ENCODE measurements at regions of chr2 and their contacts with region 1.

Region 1: DNA sequence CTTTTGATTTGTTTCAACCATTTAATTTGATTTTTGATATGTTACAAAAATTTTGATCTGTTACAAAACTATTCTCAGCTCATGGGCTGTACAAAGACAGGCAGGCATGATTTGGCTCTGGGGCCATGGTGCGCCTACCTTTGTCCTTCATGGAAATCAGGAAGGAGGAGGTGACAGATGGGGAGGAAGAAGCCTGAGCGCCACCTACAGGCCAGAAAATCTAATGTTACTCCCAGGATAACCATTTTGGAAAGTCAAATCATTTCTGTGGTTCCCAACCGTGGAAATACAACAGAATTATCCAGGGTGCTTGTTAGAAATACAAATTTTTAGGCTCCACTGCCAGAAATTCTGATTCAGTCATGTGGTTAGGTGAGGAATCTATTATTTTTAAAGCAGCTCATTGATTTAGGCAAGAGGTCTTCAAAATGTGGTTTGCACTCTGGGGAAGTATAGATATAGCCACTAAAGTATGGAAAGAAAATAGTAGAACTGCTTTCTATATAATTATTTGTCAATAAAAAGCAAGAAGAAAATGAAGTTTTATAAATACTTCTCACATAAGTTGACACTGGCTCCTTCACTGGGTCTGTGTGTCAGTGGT is 93.9 kb downstream of the EVA1A start:
- DNase-seq: peak; percentile 57
- H3K4me3 Mint-ChIP-seq: no peak overlapping the region
- H3K27ac Mint-ChIP-seq: no peak overlapping the region
- H3K4me1 Mint-ChIP-seq: peaks cover 5% of the 10 kb centered on the region
- H3K27me3 Mint-ChIP-seq: peaks cover 20% of the 10 kb centered on the region
- CTCF ChIP-seq: peak; percentile 47

Region 2: DNA sequence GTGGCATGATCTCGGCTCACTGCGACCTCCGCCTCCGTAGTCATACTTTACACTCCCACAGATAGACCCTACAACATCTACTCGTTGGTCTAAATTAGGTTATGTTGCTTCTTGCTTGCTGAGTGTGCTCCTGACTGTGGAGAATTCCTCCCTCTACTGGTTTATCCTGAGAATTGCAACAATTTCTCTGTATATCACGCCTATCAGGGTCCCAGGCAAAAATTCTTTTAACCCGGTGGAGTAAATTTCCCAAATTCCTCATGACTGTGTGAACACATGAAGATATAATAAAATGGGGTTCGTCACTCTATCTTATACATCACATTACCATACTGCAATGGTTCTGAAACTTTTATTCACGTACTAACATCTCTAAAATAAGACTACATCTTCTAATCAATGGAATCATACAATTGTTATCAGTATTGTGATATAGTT is 62.8 kb before region 1 on chr2:
- CTCF ChIA-PET with region 1: no interaction called
- POLR2A ChIA-PET with region 1: no interaction called
- intact Hi-C with region 1: no loop called
- DNase-seq: peak; percentile 58
- H3K4me3 Mint-ChIP-seq: no peak overlapping the region
- H3K27ac Mint-ChIP-seq: no peak overlapping the region
- H3K4me1 Mint-ChIP-seq: no peaks in the 10 kb centered on the region
- H3K27me3 Mint-ChIP-seq: peaks cover 100% of the 10 kb centered on the region
- CTCF ChIP-seq: peak; percentile 86

Region 3: DNA sequence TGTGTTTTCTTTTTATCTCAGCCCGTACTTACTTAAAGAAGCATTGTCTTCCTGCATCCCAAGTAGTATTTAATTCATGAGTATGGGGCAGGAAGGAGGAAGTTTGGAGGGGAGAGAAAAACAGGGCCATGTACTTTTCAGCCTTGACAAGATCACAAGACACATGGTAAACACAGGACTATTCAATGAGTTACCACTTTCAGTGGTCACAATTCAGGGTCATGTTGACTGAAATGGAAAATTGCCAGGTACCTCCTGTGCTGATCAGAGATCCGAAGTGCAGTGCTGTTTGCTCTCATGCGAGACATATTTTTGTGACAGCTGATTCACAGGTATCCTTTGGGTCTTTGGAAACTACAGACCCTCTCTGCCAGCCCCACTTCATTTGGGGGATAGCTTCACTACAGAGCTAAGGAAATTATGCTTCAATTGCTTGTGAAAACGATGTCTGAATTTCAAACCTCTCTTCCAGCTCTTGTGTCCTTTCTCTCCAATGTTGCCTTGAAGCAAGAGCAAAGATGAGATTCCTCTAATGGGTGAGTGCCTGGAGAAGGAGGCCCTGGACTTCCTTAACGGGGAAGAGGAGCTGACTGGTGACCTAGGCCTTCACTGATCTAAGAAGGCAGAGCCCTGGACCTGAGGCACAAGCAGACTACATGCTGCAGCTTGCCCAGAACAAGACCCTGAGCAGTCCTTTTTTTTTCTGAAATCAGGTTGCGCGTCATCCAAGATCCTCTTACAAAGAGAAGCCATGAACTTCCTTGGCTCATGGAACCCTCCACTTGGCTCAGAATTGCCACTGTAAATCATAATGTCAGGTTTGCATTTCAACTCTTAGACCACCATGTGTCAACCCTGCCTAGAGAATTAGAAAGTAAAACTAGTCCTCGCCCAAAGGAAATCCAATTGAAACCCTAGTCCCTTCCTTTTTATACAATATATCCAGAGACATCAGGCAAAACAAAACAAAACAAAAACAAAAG is 49.9 kb after region 1 on chr2:
- CTCF ChIA-PET with region 1: interaction called, 15 read pairs
- POLR2A ChIA-PET with region 1: no interaction called
- intact Hi-C with region 1: no loop called
- DNase-seq: no peak
- H3K4me3 Mint-ChIP-seq: no peak overlapping the region
- H3K27ac Mint-ChIP-seq: peak overlapping the region; percentile 37
- H3K4me1 Mint-ChIP-seq: peaks cover 8% of the 10 kb centered on the region
- H3K27me3 Mint-ChIP-seq: no peaks in the 10 kb centered on the region
- CTCF ChIP-seq: no peak

Region 4: GRCh38 chr2:75553935-75554531 is 87.2 kb after region 1 on chr2:
- CTCF ChIA-PET with region 1: interaction called, 50 read pairs
- POLR2A ChIA-PET with region 1: no interaction called
- intact Hi-C with region 1: no loop called
- DNase-seq: no peak
- H3K4me3 Mint-ChIP-seq: no peak overlapping the region
- H3K27ac Mint-ChIP-seq: no peak overlapping the region
- H3K4me1 Mint-ChIP-seq: peaks cover 1% of the 10 kb centered on the region
- H3K27me3 Mint-ChIP-seq: no peaks in the 10 kb centered on the region
- CTCF ChIP-seq: no peak

Region 5: DNA sequence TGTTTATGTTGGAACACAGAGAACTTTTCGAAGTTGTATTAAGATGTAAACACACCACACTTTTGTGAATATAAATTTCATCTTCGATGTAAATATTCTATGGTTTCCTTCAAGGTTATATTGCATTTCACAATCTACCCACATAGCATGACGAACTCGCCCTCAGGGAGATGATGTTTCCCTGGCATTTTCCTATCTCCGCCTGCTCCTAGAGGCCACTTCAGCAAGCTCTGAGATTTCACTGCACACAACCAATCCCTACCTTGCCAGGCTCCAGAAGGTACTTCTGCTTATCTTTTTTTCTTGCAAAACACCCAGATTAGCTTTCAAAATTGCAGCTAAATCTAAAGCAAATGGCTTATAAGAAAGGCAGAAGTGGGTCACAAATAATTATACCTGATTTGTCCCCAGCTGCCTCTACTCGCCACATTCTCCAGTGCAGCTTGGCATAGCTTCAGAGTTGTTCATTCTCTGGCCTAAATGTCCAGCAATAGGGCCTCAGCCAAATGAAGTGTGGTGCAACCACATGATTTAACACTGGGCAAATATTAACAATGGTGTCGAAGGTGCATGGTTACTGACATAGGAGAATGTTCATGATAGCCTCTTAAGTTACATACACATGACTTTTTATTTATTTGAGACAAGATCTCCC is 147.4 kb after region 1 on chr2:
- CTCF ChIA-PET with region 1: interaction called, 369 read pairs
- POLR2A ChIA-PET with region 1: interaction called, 8 read pairs
- intact Hi-C with region 1: loop called (anchors 1 kb)
- DNase-seq: peak; percentile 88
- H3K4me3 Mint-ChIP-seq: peak overlapping the region; percentile 0
- H3K27ac Mint-ChIP-seq: peak overlapping the region; percentile 55
- H3K4me1 Mint-ChIP-seq: peaks cover 17% of the 10 kb centered on the region
- H3K27me3 Mint-ChIP-seq: no peaks in the 10 kb centered on the region
- CTCF ChIP-seq: no peak

Region 6: GRCh38 chr2:75627895-75628504 is 161.2 kb after region 1 on chr2:
- CTCF ChIA-PET with region 1: interaction called, 148 read pairs
- POLR2A ChIA-PET with region 1: interaction called, 3 read pairs
- intact Hi-C with region 1: loop called (anchors 1 kb)
- DNase-seq: peak; percentile 79
- H3K4me3 Mint-ChIP-seq: no peak overlapping the region
- H3K27ac Mint-ChIP-seq: no peak overlapping the region
- H3K4me1 Mint-ChIP-seq: peaks cover 7% of the 10 kb centered on the region
- H3K27me3 Mint-ChIP-seq: no peaks in the 10 kb centered on the region
- CTCF ChIP-seq: peak; percentile 90

Region 7: DNA sequence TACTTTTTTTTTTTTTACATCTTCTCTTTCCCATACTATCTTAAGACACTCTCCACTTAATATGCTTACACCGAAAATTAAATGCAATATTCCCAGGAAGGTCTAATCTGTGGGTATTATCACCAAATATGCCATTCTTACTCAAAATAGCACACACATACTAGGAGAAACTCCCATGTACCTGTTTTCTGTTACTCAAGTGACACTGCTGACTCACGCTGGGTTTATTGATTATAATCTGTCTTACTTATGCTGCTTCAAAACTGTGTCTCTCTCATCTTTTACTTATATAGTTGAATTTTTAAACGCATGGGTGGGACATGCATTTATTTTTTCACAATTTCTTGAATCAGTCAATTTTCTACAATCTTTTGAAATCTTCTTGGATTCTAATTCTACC is 209.7 kb after region 1 on chr2:
- CTCF ChIA-PET with region 1: interaction called, 4 read pairs
- POLR2A ChIA-PET with region 1: no interaction called
- intact Hi-C with region 1: loop called (anchors 1 kb)
- DNase-seq: no peak
- H3K4me3 Mint-ChIP-seq: no peak overlapping the region
- H3K27ac Mint-ChIP-seq: no peak overlapping the region
- H3K4me1 Mint-ChIP-seq: no peaks in the 10 kb centered on the region
- H3K27me3 Mint-ChIP-seq: no peaks in the 10 kb centered on the region
- CTCF ChIP-seq: no peak

Measured in MCF 10A (cell line).